Right ventricle myocardium inferior (tissue), 1 donor: ENCODE measurements at regions of chr3 and their contacts with region 1.

Region 1: GRCh38 chr3:124772081-124772831 is 42.0 kb downstream of the UMPS start:
- DNase-seq: no peak
- ATAC-seq: peak; percentile 44

Region 2: GRCh38 chr3:124584552-124585391 is 187.5 kb before region 1 on chr3:
- intact Hi-C with region 1: no loop called
- DNase-seq: peak; percentile 84
- ATAC-seq: peak; percentile 94

Region 3: GRCh38 chr3:124812291-124813265 is 40.3 kb after region 1 on chr3:
- intact Hi-C with region 1: loop called (anchors 5 kb)
- DNase-seq: no peak
- ATAC-seq: peak; percentile 83

Region 4: GRCh38 chr3:124834723-124835718 is 62.8 kb after region 1 on chr3:
- intact Hi-C with region 1: no loop called
- DNase-seq: no peak
- ATAC-seq: peak; percentile 30